SK-N-SH (cell line): ENCODE measurements at regions of chr19 and their contacts with region 1.

Region 1: DNA sequence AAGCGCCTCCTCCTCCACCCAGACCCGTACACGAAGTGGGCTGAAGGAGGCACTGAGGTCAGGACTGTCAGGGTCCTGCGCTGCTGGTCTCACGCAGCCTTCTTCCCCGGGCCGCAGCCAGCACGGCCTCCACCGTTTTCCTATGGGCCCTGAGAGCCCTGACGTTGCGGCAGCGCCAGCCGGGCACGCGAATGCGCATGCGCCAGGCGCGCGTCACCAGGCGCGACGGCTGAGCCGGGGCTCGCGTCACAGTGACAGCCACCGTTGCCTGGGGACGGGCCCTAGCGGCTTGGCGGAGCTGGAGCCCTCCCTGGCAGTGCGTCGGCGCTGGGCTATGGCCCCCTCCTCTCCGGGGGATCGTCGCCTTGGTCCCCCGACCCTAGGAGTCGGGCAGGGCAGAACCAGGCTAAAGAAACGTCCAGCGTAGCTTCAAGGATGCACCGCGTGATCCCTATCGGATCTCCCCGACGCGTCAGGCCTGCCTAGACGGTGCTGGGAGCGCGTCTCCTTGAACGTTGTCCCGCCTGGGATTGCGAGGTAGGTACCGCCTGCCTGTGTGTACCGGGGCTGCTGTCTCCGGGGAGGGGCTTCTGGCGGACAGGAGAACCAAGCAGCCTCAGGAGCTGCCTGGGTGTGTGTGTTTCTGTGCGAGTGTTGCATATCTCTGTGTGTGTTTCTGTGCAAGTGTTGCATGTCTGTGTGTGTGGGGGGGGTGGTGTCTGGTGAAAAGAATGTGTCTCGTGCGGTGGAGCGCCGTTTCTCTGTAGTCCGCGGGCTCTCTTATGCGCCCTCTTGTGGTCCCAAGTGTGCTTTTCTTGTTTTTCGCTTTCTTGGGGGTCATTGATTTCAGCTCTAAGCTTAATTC is 43.2 kb downstream of the ZNF571 start:
- DNase-seq: peak; percentile 95
- H3K4me3 ChIP-seq: peak overlapping the region; percentile 52 to 60
- H3K27ac ChIP-seq: peak overlapping the region in 1 of 2 experiments; percentile 60; a peak in 1 of 4 replicates
- H3K4me1 ChIP-seq: no peaks in the 10 kb centered on the region; a peak in 1 of 4 replicates
- H3K27me3 ChIP-seq: no peaks in the 10 kb centered on the region
- CTCF ChIP-seq: peak; percentile 48; the same call in 1 of the 2 replicates
- EP300 ChIP-seq: no peak
- RAD21 ChIP-seq: peak; percentile 44

Region 2: GRCh38 chr19:37484406-37485115 is 66.8 kb before region 1 on chr19:
- CTCF ChIA-PET with region 1: no interaction called
- POLR2A ChIA-PET with region 1: no interaction called
- DNase-seq: no peak
- H3K4me3 ChIP-seq: peak overlapping the region in 1 of 2 experiments; percentile 6; a peak in 1 of 4 replicates
- H3K27ac ChIP-seq: no peak overlapping the region
- H3K4me1 ChIP-seq: no peaks in the 10 kb centered on the region
- H3K27me3 ChIP-seq: no peaks in the 10 kb centered on the region
- CTCF ChIP-seq: no peak
- EP300 ChIP-seq: no peak
- RAD21 ChIP-seq: no peak

Region 3: DNA sequence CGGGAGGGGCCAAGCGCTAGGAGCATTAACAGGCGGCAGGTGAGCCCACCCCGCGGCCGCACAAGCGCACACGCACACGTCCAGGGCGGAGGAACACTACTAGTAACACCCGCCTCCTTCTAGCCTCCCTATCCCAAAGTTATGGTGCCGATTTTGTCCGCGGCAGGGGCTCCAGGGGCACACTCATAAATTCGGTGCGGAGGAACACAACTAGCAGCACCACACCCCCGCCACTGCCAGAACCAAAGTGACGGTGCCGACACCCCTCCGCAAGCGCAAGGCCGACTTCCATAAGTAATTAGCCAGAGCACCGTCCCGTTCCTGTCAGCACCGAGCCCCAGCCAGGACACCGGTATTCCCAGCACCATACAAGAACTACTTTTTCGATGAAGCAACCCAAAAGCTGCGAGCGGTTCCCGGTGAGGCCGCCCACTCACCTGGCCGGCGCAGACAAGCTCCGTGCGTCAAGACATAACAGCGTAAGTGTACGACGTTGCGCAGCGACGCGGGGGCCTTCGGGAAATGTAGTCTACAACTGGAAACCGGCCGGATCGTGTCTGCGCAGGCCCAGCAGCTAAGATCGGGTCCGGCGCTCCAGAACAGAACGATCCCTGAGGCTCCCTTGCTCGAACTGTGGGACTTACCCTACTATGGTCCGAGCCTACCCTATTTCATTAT is 43.1 kb after region 1 on chr19 and contains the starts of genes ZNF540 and ZNF571:
- CTCF ChIA-PET with region 1: interaction called, 16 read pairs
- POLR2A ChIA-PET with region 1: no interaction called
- DNase-seq: peak; percentile 87
- H3K4me3 ChIP-seq: peak within 1 kb of the TSS; percentile 88 to 97
- H3K27ac ChIP-seq: peak within 1 kb of the TSS; percentile 37 to 79; a peak in 3 of 4 replicates
- H3K4me1 ChIP-seq: peaks cover 0 to 5% of the 10 kb centered on the region in 2 experiments; a peak in 2 of 4 replicates
- H3K27me3 ChIP-seq: no peaks in the 10 kb centered on the region
- CTCF ChIP-seq: no peak
- EP300 ChIP-seq: no peak
- RAD21 ChIP-seq: no peak
- polyA plus RNA-seq, gene ZNF540: 0.08 TPM in 2 replicates
- polyA plus RNA-seq, gene ZNF571: 1.1 and 3.0 TPM in 2 replicates